ENCODE measurements at regions of chr17 and their contacts with region 1.

Region 1: GRCh38 chr17:27601069-27601975 is 29.7 kb upstream of the LGALS9 start:
- DNase-seq: peak; percentile 78 to 90
- ATAC-seq: peak; percentile 70 to 72 (median 72)
- H3K4me3 ChIP-seq: no peak overlapping the region
- H3K4me3 Mint-ChIP-seq: no peak overlapping the region
- H3K27ac ChIP-seq: no peak overlapping the region
- H3K27ac Mint-ChIP-seq: no peak overlapping the region
- H3K4me1 ChIP-seq: peaks cover 11% of the 10 kb centered on the region
- H3K4me1 Mint-ChIP-seq: peaks cover 0 to 14% of the 10 kb centered on the region in 2 donors
- H3K27me3 ChIP-seq: no peaks in the 10 kb centered on the region
- H3K27me3 Mint-ChIP-seq: no peaks in the 10 kb centered on the region
- CTCF ChIP-seq: peak; percentile 93

Region 2: DNA sequence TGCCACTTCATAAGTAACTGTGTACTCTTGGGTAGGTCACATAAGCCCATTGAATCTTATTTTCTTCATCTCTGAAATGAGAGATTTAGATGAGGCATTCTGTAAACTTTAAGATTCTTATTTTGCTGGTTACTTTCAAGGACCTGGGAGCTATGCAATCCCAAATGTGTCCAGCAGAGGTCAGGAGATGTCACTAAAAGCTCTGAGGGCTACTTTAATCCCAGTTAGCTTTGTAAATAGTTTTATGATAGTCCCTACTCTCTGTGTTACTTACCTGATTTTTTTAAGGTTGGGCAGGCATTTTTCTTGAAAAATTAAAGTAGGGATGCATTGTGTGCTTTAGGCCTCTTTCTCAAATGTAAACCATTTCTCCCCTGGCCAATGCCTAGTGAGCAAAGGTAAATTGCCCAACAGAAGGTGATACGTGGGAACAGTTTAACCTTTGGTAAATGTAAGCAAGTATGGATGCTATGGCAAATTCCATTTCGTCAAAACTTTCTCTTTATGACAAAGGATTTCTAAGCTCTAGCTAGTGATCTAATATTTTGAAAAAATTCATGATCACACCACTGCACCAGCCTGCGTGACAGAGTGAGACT is 364.5 kb before region 1 on chr17:
- intact Hi-C with region 1: loop called (anchors 1 kb)
- DNase-seq: peak; percentile 72 to 87
- ATAC-seq: peak; percentile 90 to 99 (median 91)
- H3K4me3 ChIP-seq: no peak overlapping the region
- H3K4me3 Mint-ChIP-seq: no peak overlapping the region
- H3K27ac ChIP-seq: no peak overlapping the region
- H3K27ac Mint-ChIP-seq: no peak overlapping the region
- H3K4me1 ChIP-seq: peaks cover 16% of the 10 kb centered on the region
- H3K4me1 Mint-ChIP-seq: no peaks in the 10 kb centered on the region
- H3K27me3 ChIP-seq: no peaks in the 10 kb centered on the region
- H3K27me3 Mint-ChIP-seq: peaks cover 0 to 6% of the 10 kb centered on the region in 2 donors
- CTCF ChIP-seq: peak; percentile 91

Region 3: DNA sequence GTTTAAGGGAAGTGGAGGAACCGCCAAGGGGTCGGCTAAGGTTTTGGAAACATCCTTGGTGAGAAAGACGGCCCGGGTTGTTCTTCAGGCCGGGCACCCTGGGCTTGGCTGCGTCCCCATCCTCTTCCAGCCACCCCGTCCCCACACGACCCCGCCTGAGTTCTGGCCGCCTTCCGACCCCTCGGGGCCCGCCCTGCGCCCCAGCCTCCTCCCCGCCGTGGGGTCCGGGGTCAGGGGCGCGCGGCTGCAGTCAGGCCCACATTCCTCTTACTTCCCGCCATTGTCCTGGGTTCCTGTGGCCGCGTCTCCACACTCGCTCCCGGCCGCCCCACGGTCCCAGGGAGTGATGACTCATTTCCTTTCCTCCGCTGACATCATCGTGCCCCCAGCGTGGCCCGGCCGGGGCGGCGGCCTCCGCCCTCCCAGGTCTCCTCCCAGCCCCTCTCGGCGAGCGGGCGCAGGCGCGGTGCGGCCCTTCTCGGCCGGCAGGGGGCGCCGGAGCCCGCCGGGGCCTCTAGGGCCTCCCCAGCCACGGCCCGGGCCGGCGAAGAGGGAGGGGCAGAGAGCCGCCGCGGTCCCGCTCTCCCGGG is 247.8 kb before region 1 on chr17:
- intact Hi-C with region 1: loop called (anchors 1 kb)
- DNase-seq: peak; percentile 88 to 93
- ATAC-seq: peak; percentile 84 to 95 (median 88)
- H3K4me3 ChIP-seq: peak overlapping the region; percentile 60
- H3K4me3 Mint-ChIP-seq: peak overlapping the region; percentile 83
- H3K27ac ChIP-seq: peak overlapping the region; percentile 95
- H3K27ac Mint-ChIP-seq: peak overlapping the region; percentile 89 to 98
- H3K4me1 ChIP-seq: peaks cover 21% of the 10 kb centered on the region
- H3K4me1 Mint-ChIP-seq: peaks cover 35 to 44% of the 10 kb centered on the region in 2 donors
- H3K27me3 ChIP-seq: no peaks in the 10 kb centered on the region
- H3K27me3 Mint-ChIP-seq: no peaks in the 10 kb centered on the region
- CTCF ChIP-seq: peak; percentile 93

Region 4: DNA sequence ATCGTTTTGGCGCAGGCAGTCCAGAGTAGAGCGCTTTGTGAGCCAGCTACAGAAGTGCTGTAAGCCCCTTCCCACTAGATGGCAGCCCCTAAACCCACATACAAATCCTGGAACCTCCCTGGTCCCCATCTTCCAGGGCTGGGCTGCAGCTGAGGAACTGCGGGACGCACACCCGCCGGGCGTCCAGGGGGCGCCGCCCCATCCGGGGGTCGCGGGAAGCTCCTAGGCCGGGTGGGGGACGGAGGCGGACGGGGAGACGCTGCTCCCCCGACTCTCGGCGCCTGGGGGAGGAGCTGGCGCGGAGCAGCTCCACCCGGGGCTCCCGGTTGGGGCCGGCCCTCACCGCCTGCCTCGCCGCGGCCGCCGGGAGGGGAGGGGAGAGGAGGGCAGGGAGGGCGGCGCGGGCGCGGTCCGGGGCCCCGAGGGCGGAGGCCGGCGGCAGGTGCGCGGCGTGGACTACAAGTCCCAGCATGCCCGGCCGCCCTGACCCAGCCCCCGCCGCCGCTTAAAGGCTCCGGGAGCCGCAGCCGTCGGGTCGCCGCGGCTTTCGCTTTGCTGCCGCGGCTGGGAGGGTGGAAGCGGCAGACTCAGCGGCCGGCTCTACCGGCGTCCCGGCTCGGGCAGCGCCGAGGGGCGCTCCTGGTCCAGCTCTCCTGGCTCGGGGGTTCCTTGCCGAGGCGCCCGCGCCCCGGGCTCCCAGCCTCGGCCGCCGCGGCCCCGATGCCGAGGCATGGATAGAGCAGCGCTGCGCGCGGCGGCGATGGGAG is 145.2 kb before region 1 on chr17 and contains the start of gene KSR1:
- intact Hi-C with region 1: loop called (anchors 2 kb)
- DNase-seq: peak; percentile 69 to 88
- ATAC-seq: peak; percentile 86 to 90 (median 88)
- H3K4me3 ChIP-seq: peak within 1 kb of the TSS; percentile 66
- H3K4me3 Mint-ChIP-seq: peak within 1 kb of the TSS; percentile 98
- H3K27ac ChIP-seq: peak within 1 kb of the TSS; percentile 8
- H3K27ac Mint-ChIP-seq: peak within 1 kb of the TSS; percentile 62 to 82
- H3K4me1 ChIP-seq: peaks cover 31% of the 10 kb centered on the region
- H3K4me1 Mint-ChIP-seq: peaks cover 13 to 20% of the 10 kb centered on the region in 2 donors
- H3K27me3 ChIP-seq: no peaks in the 10 kb centered on the region
- H3K27me3 Mint-ChIP-seq: no peaks in the 10 kb centered on the region
- CTCF ChIP-seq: no peak
- total RNA-seq, gene KSR1: 46.4 to 63.1 (median 59.2) TPM

Region 5: GRCh38 chr17:27569257-27569722 is 32.0 kb before region 1 on chr17:
- intact Hi-C with region 1: loop called (anchors 1 kb)
- DNase-seq: peak; percentile 79 to 80
- ATAC-seq: peak; percentile 97 to 99 (median 97)
- H3K4me3 ChIP-seq: no peak overlapping the region
- H3K4me3 Mint-ChIP-seq: peak overlapping the region; percentile 81
- H3K27ac ChIP-seq: peak overlapping the region; percentile 65
- H3K27ac Mint-ChIP-seq: peak overlapping the region; percentile 93 to 94
- H3K4me1 ChIP-seq: peaks cover 43% of the 10 kb centered on the region
- H3K4me1 Mint-ChIP-seq: peaks cover 53 to 58% of the 10 kb centered on the region in 2 donors
- H3K27me3 ChIP-seq: no peaks in the 10 kb centered on the region
- H3K27me3 Mint-ChIP-seq: no peaks in the 10 kb centered on the region
- CTCF ChIP-seq: peak; percentile 74

Region 6: DNA sequence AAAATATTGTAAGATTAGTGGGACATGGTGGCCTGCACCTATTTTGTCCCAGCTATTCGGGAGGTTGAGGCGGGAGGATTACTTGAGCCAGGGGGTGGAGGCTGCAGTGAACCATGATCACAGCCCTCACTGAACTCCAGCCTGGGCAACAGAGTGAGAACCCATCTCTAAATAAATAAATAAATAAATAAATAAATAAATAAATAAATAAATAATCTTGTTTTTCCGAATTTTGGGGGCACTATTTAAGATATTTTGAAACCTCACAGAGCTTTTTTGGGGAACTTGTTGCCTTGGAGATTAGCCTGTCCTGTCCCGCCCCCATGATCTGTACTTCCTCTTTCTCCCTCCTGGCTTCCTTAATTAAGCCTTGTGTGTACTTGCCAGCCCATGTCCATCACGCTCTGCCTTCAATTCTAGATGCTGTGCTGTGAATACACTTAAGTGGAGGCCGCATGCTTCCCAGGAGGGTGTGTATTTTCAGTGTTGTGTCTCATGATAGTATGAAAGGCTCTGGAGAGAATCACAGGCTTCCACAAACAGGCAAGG is 34.0 kb after region 1 on chr17:
- intact Hi-C with region 1: no loop called
- DNase-seq: no peak
- ATAC-seq: peak in 1 of 3 donors; percentile 45
- H3K4me3 ChIP-seq: no peak overlapping the region
- H3K4me3 Mint-ChIP-seq: no peak overlapping the region
- H3K27ac ChIP-seq: peak overlapping the region; percentile 17
- H3K27ac Mint-ChIP-seq: peak overlapping the region; percentile 48 to 65
- H3K4me1 ChIP-seq: peaks cover 43% of the 10 kb centered on the region
- H3K4me1 Mint-ChIP-seq: peaks cover 39 to 55% of the 10 kb centered on the region in 2 donors
- H3K27me3 ChIP-seq: no peaks in the 10 kb centered on the region
- H3K27me3 Mint-ChIP-seq: no peaks in the 10 kb centered on the region
- CTCF ChIP-seq: no peak

Measured in natural killer cell (primary cell).